IMR-90 (cell line): ENCODE measurements at regions of chr13 and their contacts with region 1.

Region 1: GRCh38 chr13:35978603-35979316 is 152.4 kb downstream of the DCLK1 start:
- DNase-seq: peak; percentile 69
- ATAC-seq: peak; percentile 68
- H3K4me3 ChIP-seq: no peak overlapping the region
- H3K27ac ChIP-seq: no peak overlapping the region
- H3K4me1 ChIP-seq: no peaks in the 10 kb centered on the region; the same call in 1 of the 2 replicates
- H3K27me3 ChIP-seq: peaks cover 4% of the 10 kb centered on the region; the same call in 1 of the 2 replicates
- CTCF ChIP-seq: peak; percentile 86
- POLR2A ChIP-seq: no peak
- RAD21 ChIP-seq: peak; percentile 87

Region 2: GRCh38 chr13:36275190-36276002 is 296.6 kb after region 1 on chr13:
- CTCF ChIA-PET with region 1: interaction called, 24 read pairs
- POLR2A ChIA-PET with region 1: no interaction called
- dilution Hi-C with region 1: no loop called
- in situ Hi-C with region 1: no loop called
- intact Hi-C with region 1: loop called (anchors 1 kb)
- DNase-seq: peak; percentile 72
- ATAC-seq: peak; percentile 80
- H3K4me3 ChIP-seq: no peak overlapping the region
- H3K27ac ChIP-seq: no peak overlapping the region
- H3K4me1 ChIP-seq: no peaks in the 10 kb centered on the region
- H3K27me3 ChIP-seq: no peaks in the 10 kb centered on the region
- CTCF ChIP-seq: peak; percentile 67
- POLR2A ChIP-seq: no peak
- RAD21 ChIP-seq: peak; percentile 55

Region 3: GRCh38 chr13:36395280-36395679 is 416.5 kb after region 1 on chr13:
- CTCF ChIA-PET with region 1: no interaction called
- POLR2A ChIA-PET with region 1: no interaction called
- dilution Hi-C with region 1: no loop called
- in situ Hi-C with region 1: no loop called
- intact Hi-C with region 1: loop called (anchors 2 kb)
- DNase-seq: peak; percentile 66
- ATAC-seq: peak; percentile 93
- H3K4me3 ChIP-seq: no peak overlapping the region
- H3K27ac ChIP-seq: no peak overlapping the region
- H3K4me1 ChIP-seq: no peaks in the 10 kb centered on the region
- H3K27me3 ChIP-seq: peaks cover 2% of the 10 kb centered on the region; the same call in 1 of the 2 replicates
- CTCF ChIP-seq: peak; percentile 71
- POLR2A ChIP-seq: no peak
- RAD21 ChIP-seq: peak; percentile 60

Region 4: GRCh38 chr13:36736119-36736726 is 757.5 kb after region 1 on chr13:
- CTCF ChIA-PET with region 1: interaction called, 5 read pairs
- POLR2A ChIA-PET with region 1: no interaction called
- dilution Hi-C with region 1: no loop called
- in situ Hi-C with region 1: loop called (anchors 25 kb)
- intact Hi-C with region 1: loop called (anchors 1 kb)
- DNase-seq: peak; percentile 62
- ATAC-seq: peak; percentile 74
- H3K4me3 ChIP-seq: no peak overlapping the region
- H3K27ac ChIP-seq: no peak overlapping the region
- H3K4me1 ChIP-seq: no peaks in the 10 kb centered on the region
- H3K27me3 ChIP-seq: peaks cover 2% of the 10 kb centered on the region; the same call in 1 of the 2 replicates
- CTCF ChIP-seq: peak; percentile 64
- POLR2A ChIP-seq: no peak
- RAD21 ChIP-seq: peak; percentile 60

Region 5: DNA sequence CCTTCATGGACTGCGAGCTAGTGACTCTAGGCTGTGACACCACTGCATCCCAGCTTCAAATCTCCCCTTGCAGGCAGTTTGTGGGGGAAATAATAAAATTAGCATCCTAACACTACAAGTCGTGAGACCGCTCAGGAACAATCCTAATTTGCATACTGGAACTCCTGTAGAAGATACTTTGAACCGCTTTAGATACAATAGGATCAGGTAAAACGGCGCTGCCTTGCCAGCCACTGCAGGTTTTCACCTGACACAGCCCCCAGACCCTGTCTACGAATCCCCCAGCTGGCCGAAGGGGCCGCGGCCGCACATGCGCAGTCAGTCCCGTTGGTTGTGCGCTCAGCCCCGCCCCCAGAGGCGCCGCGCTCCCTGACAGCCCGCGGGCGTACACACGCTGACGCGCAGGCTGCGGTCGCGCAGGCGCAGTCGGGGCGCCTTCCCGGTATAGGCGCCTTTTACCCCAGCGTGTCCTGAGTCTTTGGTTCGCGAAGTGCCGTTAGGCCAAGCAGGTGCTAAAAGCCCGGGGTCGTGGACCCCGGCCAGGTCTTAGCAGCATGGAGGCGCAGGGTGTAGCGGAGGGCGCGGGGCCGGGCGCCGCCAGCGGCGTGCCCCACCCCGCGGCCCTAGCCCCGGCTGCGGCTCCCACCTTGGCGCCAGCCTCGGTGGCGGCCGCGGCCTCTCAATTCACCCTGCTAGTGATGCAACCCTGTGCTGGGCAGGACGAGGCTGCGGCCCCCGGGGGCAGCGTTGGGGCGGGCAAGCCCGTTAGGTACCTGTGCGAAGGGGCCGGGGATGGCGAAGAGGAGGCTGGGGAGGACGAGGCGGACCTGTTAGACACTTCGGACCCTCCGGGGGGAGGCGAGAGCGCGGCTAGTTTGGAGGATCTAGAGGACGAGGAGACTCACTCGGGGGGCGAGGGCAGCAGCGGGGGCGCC is 840.3 kb after region 1 on chr13 and contains the start of gene RFXAP:
- CTCF ChIA-PET with region 1: interaction called, 11 read pairs
- POLR2A ChIA-PET with region 1: no interaction called
- dilution Hi-C with region 1: no loop called
- in situ Hi-C with region 1: no loop called
- intact Hi-C with region 1: no loop called
- DNase-seq: peak; percentile 81
- ATAC-seq: peak; percentile 99
- H3K4me3 ChIP-seq: peak within 1 kb of the TSS; percentile 85
- H3K27ac ChIP-seq: peak within 1 kb of the TSS; percentile 31; the same call in 1 of the 2 replicates
- H3K4me1 ChIP-seq: no peaks in the 10 kb centered on the region
- H3K27me3 ChIP-seq: no peaks in the 10 kb centered on the region
- CTCF ChIP-seq: no peak; the same call in 1 of the 2 replicates
- POLR2A ChIP-seq: no peak
- RAD21 ChIP-seq: no peak
- total RNA-seq, gene RFXAP: 0.54 and 0.83 TPM in 2 replicates

Region 6: GRCh38 chr13:36973621-36974295 is 995.0 kb after region 1 on chr13:
- CTCF ChIA-PET with region 1: no interaction called
- POLR2A ChIA-PET with region 1: no interaction called
- dilution Hi-C with region 1: no loop called
- in situ Hi-C with region 1: loop called (anchors 10 kb)
- intact Hi-C with region 1: no loop called
- DNase-seq: no peak
- ATAC-seq: no peak
- H3K4me3 ChIP-seq: no peak overlapping the region
- H3K27ac ChIP-seq: no peak overlapping the region
- H3K4me1 ChIP-seq: peaks cover under 1% of the 10 kb centered on the region; the same call in 1 of the 2 replicates
- H3K27me3 ChIP-seq: no peaks in the 10 kb centered on the region
- CTCF ChIP-seq: no peak
- POLR2A ChIP-seq: no peak
- RAD21 ChIP-seq: no peak